Body of pancreas (tissue), 4 donors: ENCODE measurements at regions of chr5 and their contacts with region 1.

Region 1: DNA sequence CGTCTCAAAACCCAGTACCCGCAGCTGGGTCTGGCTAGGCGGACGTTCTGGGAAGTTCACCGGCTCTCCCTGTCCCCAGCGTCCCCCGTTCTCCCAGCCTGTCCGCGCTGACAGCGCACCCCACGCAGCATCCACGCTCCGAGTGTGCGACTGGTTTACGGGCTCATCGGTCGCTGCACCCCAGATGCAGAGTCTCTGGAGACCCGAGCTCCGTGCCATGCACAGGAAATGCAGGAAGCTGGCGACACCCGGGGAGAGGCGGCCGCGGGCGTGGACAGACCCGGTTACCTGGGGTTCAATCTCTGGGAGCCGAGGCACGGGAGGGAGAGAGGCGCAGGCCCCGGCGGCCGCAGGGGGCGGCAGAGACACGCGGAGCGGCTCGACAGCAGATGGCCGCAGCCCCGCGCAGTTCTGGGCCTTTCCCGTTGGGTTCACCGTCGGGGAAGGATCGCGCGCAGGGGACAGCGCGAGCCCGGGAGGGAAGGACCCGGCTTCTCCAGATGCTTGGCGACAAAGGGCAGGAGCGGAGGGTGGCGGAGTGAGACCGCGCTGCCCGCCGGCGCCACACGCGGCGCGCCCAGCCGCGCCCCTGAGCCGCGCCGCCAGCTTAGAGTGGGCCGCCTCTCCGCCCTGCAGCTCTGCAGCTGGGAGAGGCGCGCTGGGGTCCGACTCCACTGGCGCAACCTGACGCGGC is 558 bp downstream of the SHROOM1 start:
- DNase-seq: peak; percentile 84 to 88 (median 86)
- ATAC-seq: peak; percentile 88
- H3K4me3 ChIP-seq: peak overlapping the region; percentile 17 to 32
- H3K27ac ChIP-seq: peak overlapping the region; percentile 89 to 95 (median 94)
- H3K4me1 ChIP-seq: peaks cover 24% of the 10 kb centered on the region
- H3K27me3 ChIP-seq: no peaks in the 10 kb centered on the region
- CTCF ChIP-seq: peak; percentile 90 to 94 (median 93)
- POLR2A ChIP-seq: peak in 1 of 3 donors; percentile 48

Region 2: DNA sequence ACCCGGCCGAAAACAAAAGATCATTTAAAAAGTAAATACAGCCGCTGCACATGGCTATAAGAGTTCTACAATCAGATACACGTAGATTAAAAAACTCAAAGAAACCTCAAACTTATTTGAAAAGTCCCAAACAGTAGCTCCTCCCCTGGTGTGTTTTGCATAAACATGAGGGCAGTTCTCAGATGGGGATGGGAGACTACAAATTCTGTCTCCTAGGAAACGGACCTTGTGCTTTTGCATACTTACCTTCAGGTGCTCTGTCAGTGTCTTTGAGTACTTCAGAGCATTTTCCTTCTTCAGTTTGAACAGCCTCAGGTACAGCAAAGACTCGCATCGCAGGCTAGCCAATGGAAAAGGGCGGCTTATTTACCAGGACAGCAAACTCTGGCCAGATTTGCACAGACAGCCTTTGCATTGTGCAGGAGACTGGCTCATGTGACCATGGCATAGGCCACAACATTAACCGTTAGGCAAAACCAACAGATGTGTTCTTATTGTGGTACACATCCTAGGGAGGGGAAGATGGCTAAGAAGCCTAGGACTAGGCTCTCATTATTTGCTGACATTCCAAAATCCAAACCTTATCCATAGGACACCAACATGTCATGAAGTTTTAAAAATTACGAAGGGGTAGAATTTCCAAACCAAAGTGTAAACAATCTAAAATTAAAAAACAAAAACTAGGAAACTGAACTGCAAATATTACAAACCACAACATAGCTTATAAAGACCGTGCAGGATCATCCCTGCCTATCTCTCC is 56.4 kb after region 1 on chr5:
- intact Hi-C with region 1: loop called (anchors 5 kb)
- DNase-seq: no peak
- ATAC-seq: no peak
- H3K4me3 ChIP-seq: no peak overlapping the region
- H3K27ac ChIP-seq: no peak overlapping the region
- H3K4me1 ChIP-seq: peaks cover 6% of the 10 kb centered on the region
- H3K27me3 ChIP-seq: no peaks in the 10 kb centered on the region
- CTCF ChIP-seq: no peak
- POLR2A ChIP-seq: no peak